HCT116 (cell line): ENCODE measurements at regions of chr19 and their contacts with region 1.

Region 1: GRCh38 chr19:3721131-3721886 is 13.1 kb downstream of the TJP3 start:
- DNase-seq: peak; percentile 95
- ATAC-seq: peak; percentile 48
- H3K4me3 ChIP-seq: peak overlapping the region; percentile 63 to 71
- H3K27ac ChIP-seq: peak overlapping the region; percentile 33; the same call in 1 of the 2 replicates
- H3K4me1 ChIP-seq: peaks cover 52 to 89% of the 10 kb centered on the region in 2 experiments
- H3K27me3 ChIP-seq: no peaks in the 10 kb centered on the region
- CTCF ChIP-seq: no peak
- POLR2A ChIP-seq: no peak
- RAD21 ChIP-seq: no peak

Region 2: GRCh38 chr19:3710265-3710812 is 11.0 kb before region 1 on chr19:
- CTCF ChIA-PET with region 1: interaction called, 15 read pairs
- POLR2A ChIA-PET with region 1: interaction called, 9 read pairs
- RAD21 ChIA-PET with region 1: interaction called, 4 to 7 read pairs
- intact Hi-C with region 1: no loop called
- DNase-seq: peak; percentile 83
- ATAC-seq: peak; percentile 70
- H3K4me3 ChIP-seq: peak overlapping the region; percentile 2 to 47
- H3K27ac ChIP-seq: peak overlapping the region; percentile 80
- H3K4me1 ChIP-seq: peaks cover 62 to 84% of the 10 kb centered on the region in 2 experiments
- H3K27me3 ChIP-seq: no peaks in the 10 kb centered on the region
- CTCF ChIP-seq: no peak
- POLR2A ChIP-seq: no peak
- RAD21 ChIP-seq: no peak

Region 3: DNA sequence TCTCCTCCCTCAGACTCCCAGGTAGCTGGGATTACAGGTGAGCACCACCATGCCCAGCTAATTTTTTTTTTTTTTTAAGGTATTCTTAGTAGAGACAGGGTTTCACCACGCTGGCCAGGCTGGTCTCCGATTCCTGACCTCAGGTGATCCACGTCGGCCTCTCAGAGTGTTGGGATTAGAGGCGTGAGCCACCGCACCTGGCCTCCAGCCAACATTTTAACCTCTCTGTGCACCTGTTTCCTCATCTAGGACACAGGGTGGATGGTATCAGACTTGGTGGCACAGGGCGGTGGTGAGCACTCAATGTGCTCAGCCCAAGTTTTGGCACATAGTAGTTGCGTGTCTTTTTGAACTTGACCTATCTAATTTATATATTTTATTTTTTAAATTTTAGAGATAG is 27.7 kb after region 1 on chr19:
- CTCF ChIA-PET with region 1: no interaction called
- POLR2A ChIA-PET with region 1: no interaction called
- RAD21 ChIA-PET with region 1: no interaction called
- intact Hi-C with region 1: no loop called
- DNase-seq: no peak
- ATAC-seq: no peak
- H3K4me3 ChIP-seq: no peak overlapping the region
- H3K27ac ChIP-seq: no peak overlapping the region
- H3K4me1 ChIP-seq: no peaks in the 10 kb centered on the region
- H3K27me3 ChIP-seq: no peaks in the 10 kb centered on the region
- CTCF ChIP-seq: no peak
- POLR2A ChIP-seq: no peak
- RAD21 ChIP-seq: no peak

Region 4: GRCh38 chr19:3762501-3763459 is 41.5 kb after region 1 on chr19 and contains the start of gene MRPL54:
- CTCF ChIA-PET with region 1: interaction called, 9 read pairs
- POLR2A ChIA-PET with region 1: interaction called, 10 read pairs
- RAD21 ChIA-PET with region 1: no interaction called
- intact Hi-C with region 1: no loop called
- DNase-seq: peak; percentile 98
- ATAC-seq: peak; percentile 88
- H3K4me3 ChIP-seq: peak within 1 kb of the TSS; percentile 77 to 99
- H3K27ac ChIP-seq: peak within 1 kb of the TSS; percentile 93
- H3K4me1 ChIP-seq: peaks cover 6 to 14% of the 10 kb centered on the region in 2 experiments; a peak in 2 of 4 replicates
- H3K27me3 ChIP-seq: no peaks in the 10 kb centered on the region
- CTCF ChIP-seq: no peak
- POLR2A ChIP-seq: peak; percentile 67
- RAD21 ChIP-seq: no peak
- total RNA-seq, gene MRPL54: 67.1 TPM

Region 5: GRCh38 chr19:4208385-4209094 is 487.2 kb after region 1 on chr19:
- CTCF ChIA-PET with region 1: no interaction called
- POLR2A ChIA-PET with region 1: interaction called, 4 read pairs
- RAD21 ChIA-PET with region 1: no interaction called
- intact Hi-C with region 1: loop called (anchors 10 kb)
- DNase-seq: peak; percentile 66
- ATAC-seq: peak; percentile 77
- H3K4me3 ChIP-seq: peak overlapping the region; percentile 40 to 48
- H3K27ac ChIP-seq: peak overlapping the region; percentile 70
- H3K4me1 ChIP-seq: peaks cover 21 to 40% of the 10 kb centered on the region in 2 experiments
- H3K27me3 ChIP-seq: no peaks in the 10 kb centered on the region
- CTCF ChIP-seq: peak; percentile 76 to 78 (median 77)
- POLR2A ChIP-seq: no peak
- RAD21 ChIP-seq: peak; percentile 77